Esophagus squamous epithelium (tissue), 5 donors: ENCODE measurements at regions of chr1 and their contacts with region 1.

Region 1: GRCh38 chr1:167066333-167067122 is 23.6 kb downstream of the GPA33 start:
- DNase-seq: no peak
- H3K4me3 ChIP-seq: peak overlapping the region in 3 of 4 donors; percentile 15 to 48 (median 34)
- H3K27ac ChIP-seq: no peak overlapping the region
- H3K4me1 ChIP-seq: peaks cover 0 to 8% (median 0%) of the 10 kb centered on the region in 3 donors
- H3K27me3 ChIP-seq: peaks cover 0 to 4% (median 0%) of the 10 kb centered on the region in 4 donors
- CTCF ChIP-seq: peak; percentile 82 to 95 (median 92)
- POLR2A ChIP-seq: no peak

Region 2: DNA sequence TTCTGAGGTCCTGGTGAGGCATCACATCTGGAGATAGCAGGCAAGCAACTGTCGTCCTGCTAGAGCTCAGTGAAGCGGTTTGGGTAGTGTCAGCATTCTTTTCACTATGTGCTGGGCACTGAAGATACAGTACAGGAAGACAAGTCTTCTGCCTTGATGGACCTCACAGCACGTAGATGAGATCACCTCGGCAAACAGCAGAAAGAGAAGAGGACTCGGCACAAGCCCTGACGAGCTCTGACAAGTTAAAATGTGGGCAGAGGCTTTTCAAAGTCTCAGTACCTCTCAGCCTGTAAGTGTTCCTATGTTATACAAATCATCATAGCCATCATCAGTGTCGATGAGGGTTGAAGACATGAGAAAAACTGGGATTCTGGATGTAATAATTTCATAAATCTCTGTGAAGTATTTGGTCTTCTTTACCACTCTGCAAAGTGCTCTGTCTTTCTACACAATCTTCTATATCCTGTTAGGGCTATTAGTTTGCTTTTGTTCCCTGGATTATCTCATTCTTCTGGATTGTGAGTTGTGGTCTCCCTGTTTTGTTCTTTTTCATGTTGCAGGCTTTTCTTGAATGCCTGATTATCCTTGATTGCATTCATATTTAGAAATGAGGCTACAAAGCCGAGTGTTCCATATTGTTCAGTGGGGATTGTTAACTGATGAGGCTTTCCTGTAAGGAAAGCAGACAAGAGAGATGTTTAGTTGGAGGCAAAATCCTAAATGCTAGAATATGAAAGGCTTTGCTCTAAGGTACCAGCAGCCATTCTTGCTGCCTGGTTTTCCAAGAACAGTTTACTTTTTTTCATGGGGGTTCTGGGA is 53.2 kb before region 1 on chr1:
- intact Hi-C with region 1: no loop called
- DNase-seq: no peak
- H3K4me3 ChIP-seq: no peak overlapping the region
- H3K27ac ChIP-seq: no peak overlapping the region
- H3K4me1 ChIP-seq: no peaks in the 10 kb centered on the region
- H3K27me3 ChIP-seq: no peaks in the 10 kb centered on the region
- CTCF ChIP-seq: no peak
- POLR2A ChIP-seq: no peak

Region 3: DNA sequence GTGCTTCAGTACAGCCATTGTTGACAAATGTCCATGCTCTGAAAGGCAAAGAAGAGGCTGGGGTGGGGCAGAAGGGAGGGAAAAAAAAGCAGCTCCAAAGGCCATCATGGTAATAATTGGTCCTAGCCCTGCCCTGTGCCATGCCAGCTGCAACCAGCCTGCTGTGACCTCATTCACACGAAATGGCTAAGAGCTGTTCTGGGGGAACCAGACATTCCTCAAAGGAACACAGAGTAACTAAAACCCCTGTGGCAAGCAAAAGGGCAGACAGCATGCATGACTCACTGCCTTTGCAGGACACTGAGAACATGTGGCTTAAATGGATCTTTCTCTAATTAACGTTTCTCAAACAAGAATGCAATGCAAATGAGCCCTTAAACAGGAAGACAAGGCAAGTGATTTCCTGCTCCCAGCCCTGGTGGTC is 69.7 kb after region 1 on chr1:
- intact Hi-C with region 1: no loop called
- DNase-seq: no peak
- H3K4me3 ChIP-seq: no peak overlapping the region
- H3K27ac ChIP-seq: no peak overlapping the region
- H3K4me1 ChIP-seq: no peaks in the 10 kb centered on the region
- H3K27me3 ChIP-seq: peaks cover 0 to 11% (median 0%) of the 10 kb centered on the region in 4 donors
- CTCF ChIP-seq: no peak
- POLR2A ChIP-seq: no peak

Region 4: DNA sequence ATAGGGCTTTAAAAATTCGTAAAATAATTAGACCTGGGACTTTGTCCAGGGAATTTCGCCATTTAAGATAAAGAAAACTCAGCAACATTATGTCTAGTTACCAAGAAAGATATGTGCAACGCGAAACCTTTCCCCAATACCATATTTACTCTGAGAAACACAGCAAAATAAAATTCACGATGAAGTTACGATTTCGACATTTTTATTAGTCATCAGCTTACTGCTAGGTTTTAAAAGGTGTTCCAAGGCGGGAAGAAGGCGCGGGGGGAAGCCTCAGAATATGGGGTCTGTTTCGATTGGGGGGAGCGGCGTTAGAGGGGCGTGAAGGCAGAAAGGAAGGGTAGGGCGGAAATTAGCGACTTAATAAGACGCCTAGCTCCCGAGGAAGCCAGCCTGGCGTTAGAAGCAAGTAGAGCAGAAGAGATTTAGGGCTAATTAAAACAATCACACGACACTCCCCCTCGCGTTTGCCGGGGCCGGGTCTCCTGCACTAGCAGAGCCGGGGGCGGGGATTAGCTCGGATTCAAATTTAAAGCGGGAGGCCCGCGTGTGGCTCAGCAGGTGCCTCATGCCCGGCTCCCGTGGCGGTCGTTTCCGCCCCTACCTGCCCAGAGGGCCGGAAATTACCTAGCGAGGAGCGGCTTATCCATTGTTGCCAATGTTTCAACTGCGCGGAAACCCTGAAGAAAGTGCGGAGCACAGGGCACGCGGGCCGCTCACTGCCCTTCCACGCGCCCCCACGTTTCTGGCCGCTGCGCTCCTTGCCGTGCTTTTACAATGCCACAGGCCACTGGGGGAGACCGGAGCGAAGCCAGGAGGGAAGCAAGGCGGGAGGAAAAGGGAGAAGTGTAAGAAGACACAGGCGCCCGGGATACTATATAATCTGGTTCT is 153.4 kb after region 1 on chr1:
- intact Hi-C with region 1: loop called (anchors 10 kb)
- DNase-seq: peak; percentile 58
- H3K4me3 ChIP-seq: peak overlapping the region; percentile 44 to 95 (median 80)
- H3K27ac ChIP-seq: peak overlapping the region; percentile 79 to 99 (median 94)
- H3K4me1 ChIP-seq: peaks cover 0 to 32% (median 11%) of the 10 kb centered on the region in 3 donors
- H3K27me3 ChIP-seq: no peaks in the 10 kb centered on the region
- CTCF ChIP-seq: peak in 2 of 6 experiments; percentile 16 to 17
- POLR2A ChIP-seq: peak in 1 of 4 donors; percentile 23

Region 5: DNA sequence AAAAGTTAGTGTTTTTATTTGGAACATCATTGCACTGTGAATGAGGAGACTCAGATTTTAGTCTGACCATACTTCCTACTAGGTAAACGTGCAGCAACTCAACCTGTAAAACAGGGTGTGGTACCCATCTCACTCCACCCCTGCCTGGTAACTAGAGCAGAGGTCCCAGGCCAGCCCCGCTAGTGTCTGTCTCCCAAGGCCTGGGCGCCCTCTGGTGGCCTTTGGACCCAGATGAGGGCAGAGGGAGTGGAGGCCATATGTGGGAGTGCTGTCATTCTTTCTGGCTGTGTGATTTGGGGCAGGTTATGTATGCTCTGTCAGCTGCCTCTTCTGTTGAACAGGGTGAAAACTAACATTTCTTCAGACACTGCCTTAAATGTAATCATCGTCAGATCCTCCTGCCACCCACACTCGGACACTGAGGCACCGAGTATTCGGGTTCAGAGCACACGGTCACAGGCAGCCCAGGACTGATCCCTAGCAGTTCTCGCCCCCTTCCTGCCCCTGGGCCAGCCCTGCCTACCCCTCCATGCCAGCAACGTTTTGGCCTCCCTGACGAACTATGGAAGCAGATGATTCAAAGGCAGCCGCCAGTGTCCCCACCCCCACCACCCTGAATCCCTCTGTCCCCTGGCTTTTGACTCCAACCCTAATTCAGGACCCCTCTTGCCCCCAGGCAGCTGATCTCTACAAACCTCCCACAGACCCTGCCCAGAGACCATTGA is 375.8 kb after region 1 on chr1:
- intact Hi-C with region 1: loop called (anchors 10 kb)
- DNase-seq: peak; percentile 29
- H3K4me3 ChIP-seq: no peak overlapping the region
- H3K27ac ChIP-seq: peak overlapping the region in 2 of 4 donors; percentile 28 to 31
- H3K4me1 ChIP-seq: peaks cover 9 to 28% (median 11%) of the 10 kb centered on the region in 3 donors
- H3K27me3 ChIP-seq: peaks cover 0 to 18% (median 0%) of the 10 kb centered on the region in 4 donors
- CTCF ChIP-seq: peak; percentile 74 to 95 (median 89)
- POLR2A ChIP-seq: no peak

Region 6: DNA sequence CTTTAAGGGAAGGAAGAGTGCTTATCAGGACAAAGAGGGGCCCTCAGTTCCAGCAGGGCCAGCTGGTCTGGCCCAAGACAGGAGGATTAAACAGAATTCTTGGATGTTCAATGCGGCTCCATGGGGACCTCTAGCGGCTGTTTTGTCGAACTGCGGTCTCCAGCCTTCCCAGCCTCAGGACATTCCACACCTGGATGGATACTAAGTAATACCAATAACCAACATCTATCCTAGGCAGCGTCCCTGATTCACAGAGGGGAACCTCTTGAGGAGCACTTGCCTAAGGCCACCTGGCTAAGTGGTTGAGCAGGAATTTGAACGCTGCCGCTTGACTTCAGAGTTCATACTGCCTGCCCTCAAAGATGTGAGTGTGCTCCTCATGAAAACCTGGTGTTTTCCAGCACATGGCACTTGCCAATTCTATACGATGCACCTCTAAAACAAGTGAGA is 467.3 kb after region 1 on chr1:
- intact Hi-C with region 1: loop called (anchors 10 kb)
- DNase-seq: peak; percentile 17
- H3K4me3 ChIP-seq: no peak overlapping the region
- H3K27ac ChIP-seq: no peak overlapping the region
- H3K4me1 ChIP-seq: peaks cover 0 to 14% (median 3%) of the 10 kb centered on the region in 3 donors
- H3K27me3 ChIP-seq: no peaks in the 10 kb centered on the region
- CTCF ChIP-seq: peak; percentile 62 to 91 (median 83)
- POLR2A ChIP-seq: no peak